AG04450 (cell line): ENCODE measurements at regions of chr1 and their contacts with region 1.

Region 1: GRCh38 chr1:2194898-2195673 is 514 bp upstream of the FAAP20 start:
- DNase-seq: peak; percentile 48
- H3K4me3 ChIP-seq: peak overlapping the region; percentile 70
- H3K27ac ChIP-seq: peak overlapping the region; percentile 89
- H3K27me3 ChIP-seq: no peaks in the 10 kb centered on the region
- CTCF ChIP-seq: peak; percentile 85

Region 2: GRCh38 chr1:2205191-2205952 is 10.3 kb after region 1 on chr1:
- CTCF ChIA-PET with region 1: interaction called, 22 read pairs
- POLR2A ChIA-PET with region 1: interaction called, 6 read pairs
- DNase-seq: peak; percentile 81
- H3K4me3 ChIP-seq: peak overlapping the region; percentile 50
- H3K27ac ChIP-seq: no peak overlapping the region
- H3K27me3 ChIP-seq: no peaks in the 10 kb centered on the region
- CTCF ChIP-seq: no peak

Region 3: DNA sequence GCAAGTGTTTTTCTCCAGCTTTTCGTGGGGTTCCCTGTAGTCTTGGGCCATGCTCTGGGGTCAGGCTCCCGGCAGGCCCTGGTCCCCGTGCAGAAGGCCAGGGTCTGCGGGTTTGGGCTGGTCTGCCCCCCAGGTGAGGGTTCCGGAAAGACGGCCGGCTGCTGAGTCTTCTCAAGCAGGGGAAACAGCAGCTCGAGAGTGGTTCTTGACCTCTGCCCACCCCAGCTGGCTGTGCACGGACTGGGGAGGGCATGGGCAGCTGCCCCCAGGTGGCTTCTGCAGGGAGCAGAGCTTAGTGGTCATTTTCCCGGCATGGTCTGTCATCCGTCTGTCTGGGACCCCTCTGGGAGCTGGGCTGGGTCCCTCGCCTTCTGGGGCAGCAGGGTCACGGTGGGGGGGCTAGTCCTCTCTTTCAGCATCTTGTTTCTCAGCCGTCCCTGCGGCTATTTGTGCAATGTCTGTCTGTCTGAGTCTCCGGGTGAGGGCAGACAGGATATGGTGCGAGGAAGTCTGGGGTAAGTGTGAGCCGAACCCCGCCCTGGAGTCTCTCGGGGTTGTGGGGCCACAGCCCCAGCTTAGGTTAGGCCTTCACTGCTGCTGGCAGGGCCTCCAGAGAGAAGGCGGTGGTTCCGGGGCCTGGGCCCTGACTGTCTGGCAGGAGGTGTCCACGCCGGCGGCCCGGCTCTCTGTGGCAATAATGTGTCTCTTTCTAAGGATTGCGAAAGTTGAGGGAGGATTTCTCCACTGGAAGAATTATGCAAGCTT is 39.1 kb after region 1 on chr1:
- CTCF ChIA-PET with region 1: interaction called, 11 read pairs
- POLR2A ChIA-PET with region 1: interaction called, 7 read pairs
- DNase-seq: peak; percentile 61
- H3K4me3 ChIP-seq: peak overlapping the region; percentile 87
- H3K27ac ChIP-seq: no peak overlapping the region
- H3K27me3 ChIP-seq: no peaks in the 10 kb centered on the region
- CTCF ChIP-seq: no peak

Region 4: DNA sequence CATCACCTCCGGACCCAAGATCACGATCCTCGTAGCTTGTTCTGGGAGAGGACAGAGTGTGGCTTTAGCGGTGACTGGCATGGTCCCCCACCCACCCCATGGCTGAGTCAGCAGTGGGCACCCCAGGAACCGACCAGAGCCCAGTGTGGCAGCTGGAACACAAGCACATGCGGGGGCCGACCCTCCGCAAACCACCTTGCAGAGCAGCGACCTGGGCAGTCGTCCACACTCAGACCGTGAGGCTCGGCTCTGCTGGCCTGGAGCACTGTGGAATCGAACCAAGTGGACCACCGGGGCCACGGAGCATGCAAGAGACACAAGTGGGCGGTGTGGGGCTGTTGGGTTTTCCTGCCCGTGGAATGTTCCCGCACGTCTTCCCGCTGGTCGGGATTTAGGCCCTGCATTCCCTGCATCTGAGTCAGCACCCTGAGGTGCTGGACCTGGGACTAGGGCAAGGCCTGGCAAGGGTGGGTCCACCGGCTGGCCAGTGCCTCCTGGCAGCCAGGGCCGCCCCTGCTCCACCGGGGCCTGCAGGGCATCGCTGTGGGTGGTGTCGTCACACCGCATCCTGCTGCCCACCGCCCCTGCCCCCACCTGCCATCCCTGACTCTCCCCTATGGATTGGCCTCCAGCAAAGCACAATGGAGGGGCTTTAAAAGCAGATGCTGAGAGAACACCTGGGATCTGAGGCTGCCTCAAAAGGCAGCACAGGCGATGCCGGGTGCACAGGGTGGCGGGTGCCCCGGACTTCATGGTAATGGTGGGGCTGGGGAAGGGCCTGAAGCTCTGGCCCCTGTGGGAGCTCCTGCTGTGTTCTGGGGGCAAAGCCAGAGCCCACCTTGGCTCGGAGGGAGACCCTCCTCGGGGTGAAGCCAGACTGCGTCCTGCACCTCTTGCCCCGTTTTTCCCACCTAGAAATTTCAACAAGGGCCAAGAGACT is 177.7 kb after region 1 on chr1:
- CTCF ChIA-PET with region 1: interaction called, 255 read pairs
- POLR2A ChIA-PET with region 1: interaction called, 5 read pairs
- DNase-seq: no peak
- H3K4me3 ChIP-seq: no peak overlapping the region
- H3K27ac ChIP-seq: no peak overlapping the region
- H3K27me3 ChIP-seq: no peaks in the 10 kb centered on the region
- CTCF ChIP-seq: no peak

Region 5: GRCh38 chr1:2499986-2500596 is 305.0 kb after region 1 on chr1:
- CTCF ChIA-PET with region 1: no interaction called
- POLR2A ChIA-PET with region 1: no interaction called
- DNase-seq: no peak
- H3K4me3 ChIP-seq: no peak overlapping the region
- H3K27ac ChIP-seq: no peak overlapping the region
- H3K27me3 ChIP-seq: peaks cover 20% of the 10 kb centered on the region
- CTCF ChIP-seq: no peak